ENCODE measurements at regions of chr9 and their contacts with region 1.

Region 1: DNA sequence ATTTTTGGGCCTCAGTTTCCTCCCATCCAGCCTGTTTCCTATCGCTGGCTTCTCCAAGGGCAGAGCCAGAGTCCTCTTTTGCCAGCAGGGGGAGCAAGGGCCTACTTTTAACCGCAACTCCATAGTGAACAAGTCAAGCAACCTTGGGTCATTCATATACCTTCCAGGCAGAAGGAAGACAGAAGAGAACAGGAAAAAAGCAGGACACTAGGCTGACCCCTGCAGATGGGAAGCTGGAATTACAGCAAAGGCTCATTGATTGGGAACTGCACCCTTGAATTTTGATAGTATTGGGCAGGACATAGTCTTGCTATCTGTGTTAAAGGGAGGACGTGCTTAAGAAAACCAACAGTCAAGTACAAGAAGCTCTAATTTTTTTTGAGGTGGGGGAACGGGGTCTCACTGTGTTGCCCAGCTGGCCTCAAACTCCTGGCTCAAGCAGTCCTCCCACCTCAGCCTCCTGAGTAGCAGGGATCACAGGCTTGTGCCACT is 30.1 kb downstream of the QRFP start:
- DNase-seq: peak in 8 of 10 donors; percentile 48 to 91 (median 70)

Region 2: DNA sequence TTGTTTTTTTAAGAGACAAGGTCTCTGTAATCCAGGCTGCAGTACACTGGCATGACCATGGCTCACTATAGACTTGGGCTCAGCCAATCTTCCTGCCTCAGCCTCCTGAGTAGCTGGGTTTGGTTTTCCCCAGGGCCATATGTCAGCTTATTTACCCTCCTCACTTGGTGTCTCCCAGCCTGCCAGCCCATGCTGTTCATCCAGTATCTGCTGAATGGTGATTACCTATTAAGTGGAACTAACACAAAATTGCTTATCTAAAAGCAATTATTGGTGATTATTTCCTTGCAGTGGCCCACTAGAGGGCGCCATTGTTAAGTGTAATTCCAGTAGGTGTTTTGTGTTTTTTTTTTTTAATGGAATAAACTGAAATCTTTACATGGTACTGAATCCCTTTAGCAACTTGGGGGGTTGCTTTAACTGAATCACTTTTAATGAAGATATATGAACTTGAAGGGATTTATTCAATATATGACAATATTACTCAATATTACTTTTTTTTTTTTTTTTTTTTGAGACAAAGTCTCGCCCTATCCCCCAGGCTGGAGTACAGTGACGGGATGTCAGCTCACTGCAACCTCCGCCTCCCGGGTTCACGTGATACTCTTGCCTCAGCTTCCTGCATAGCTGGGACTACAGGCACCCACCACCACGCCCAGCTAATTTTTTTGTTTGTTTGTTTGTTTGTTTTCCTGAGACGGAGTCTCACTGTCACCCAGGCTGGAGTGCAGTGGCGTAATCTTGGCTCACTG is 159.1 kb before region 1 on chr9:
- intact Hi-C with region 1: loop called (anchors 2 kb)
- DNase-seq: peak in 5 of 10 donors; percentile 23 to 65 (median 47)

Region 3: DNA sequence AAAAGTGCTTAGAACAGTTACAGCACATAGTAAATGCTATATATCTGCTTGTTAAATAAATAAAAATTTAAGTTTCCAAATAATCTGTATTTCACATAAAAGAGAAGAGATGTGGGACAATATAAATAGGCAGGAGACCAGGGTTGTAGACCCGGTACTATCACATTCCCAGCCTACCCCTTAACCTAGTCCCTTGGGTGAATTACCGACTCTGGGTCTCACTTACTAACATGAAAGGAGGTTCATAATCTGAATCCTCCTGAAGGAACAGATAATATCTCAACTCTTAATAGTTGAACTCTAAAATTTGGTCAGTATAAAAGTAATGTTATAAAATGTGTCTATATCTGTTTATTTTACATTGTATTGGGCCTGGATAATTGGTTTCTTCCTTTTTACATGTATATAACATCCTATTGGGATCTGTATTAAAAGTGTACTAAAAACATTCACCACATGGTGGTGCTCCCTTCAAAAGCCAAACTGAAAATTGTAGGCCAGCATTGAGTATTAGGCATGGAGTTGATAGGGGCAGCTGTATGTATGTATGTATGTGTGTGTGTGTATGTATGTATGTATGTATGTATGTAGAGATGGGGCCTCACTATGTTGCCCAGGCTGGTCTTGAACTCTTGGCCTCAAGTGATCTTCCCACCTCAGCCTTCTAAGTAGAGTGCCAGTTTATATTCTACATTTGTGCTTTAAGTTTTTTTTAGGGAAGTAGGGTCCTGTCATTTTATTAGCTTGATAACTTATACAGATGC is 95.7 kb before region 1 on chr9:
- intact Hi-C with region 1: loop called (anchors 1 kb)
- DNase-seq: no peak

Region 4: GRCh38 chr9:130940693-130941576 is 74.4 kb after region 1 on chr9:
- intact Hi-C with region 1: loop called (anchors 2 kb)
- DNase-seq: peak; percentile 43 to 95 (median 71)

Region 5: DNA sequence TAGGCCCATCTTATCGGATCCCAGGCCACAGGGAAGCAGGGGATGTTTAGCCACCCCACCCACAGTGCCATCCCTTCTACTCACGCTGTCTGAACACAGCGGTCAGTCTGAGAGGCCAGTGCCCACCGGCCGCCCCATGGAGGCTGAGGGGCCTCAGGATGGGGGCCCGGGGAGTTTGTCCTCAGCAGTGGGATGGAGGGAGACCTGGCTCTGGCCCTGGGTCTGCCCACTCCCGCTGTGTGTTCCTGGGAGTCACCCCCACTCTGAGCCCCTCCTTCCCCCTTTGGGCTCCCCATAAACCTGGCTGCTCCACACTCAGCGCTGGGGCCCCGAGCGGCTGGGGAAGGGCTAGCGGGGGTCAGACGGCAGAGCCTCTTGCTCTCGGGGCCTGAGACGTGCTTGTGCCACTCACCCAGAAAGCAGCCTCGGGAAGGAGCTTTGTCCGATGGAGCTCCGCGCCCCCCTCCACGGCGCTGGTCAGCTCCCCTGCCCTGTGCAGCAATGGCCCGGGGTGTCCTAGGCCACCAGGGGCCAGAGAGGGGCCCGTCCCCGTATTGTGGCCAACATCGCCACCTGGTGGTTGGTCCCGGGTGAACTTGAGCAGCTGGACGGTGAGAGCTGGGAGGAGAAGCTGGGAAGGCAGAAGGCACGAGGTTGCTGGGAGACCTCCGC is 131.5 kb after region 1 on chr9:
- intact Hi-C with region 1: loop called (anchors 2 kb)
- DNase-seq: peak; percentile 49 to 95 (median 79)

Region 6: DNA sequence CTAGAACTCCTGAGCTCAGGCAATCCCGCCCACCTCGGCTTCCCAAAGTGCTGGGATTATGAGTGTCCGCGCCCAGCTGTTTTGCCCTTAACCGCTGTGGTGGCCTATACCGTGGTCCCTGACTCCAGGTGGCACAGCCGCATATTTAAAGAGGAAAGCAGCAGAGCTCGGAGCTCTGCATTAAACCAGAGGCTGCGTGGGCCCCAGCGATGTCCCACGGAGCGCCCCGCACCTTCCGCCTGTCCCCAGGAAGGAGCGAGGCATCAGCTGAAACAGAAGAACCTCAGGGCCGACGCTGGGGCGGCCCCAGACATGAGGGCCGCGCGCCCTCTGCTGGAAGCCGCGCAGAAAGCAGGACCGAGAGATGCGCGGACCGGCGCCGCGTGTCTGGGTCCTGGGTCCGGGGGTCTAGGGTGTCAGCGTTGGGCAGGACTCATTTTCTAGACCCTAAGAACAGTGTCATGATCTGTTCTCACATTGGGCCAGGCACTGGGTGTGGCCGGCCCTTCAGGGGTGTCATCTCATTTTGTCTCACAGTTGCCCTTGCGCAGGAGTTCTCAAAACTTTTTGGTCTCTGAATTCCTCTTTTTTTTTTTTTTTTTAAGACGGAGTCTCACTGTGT is 180.2 kb after region 1 on chr9:
- intact Hi-C with region 1: loop called (anchors 2 kb)
- DNase-seq: peak; percentile 31 to 96 (median 68)